ENCODE measurements at regions of chr9 and their contacts with region 1.

Region 1: DNA sequence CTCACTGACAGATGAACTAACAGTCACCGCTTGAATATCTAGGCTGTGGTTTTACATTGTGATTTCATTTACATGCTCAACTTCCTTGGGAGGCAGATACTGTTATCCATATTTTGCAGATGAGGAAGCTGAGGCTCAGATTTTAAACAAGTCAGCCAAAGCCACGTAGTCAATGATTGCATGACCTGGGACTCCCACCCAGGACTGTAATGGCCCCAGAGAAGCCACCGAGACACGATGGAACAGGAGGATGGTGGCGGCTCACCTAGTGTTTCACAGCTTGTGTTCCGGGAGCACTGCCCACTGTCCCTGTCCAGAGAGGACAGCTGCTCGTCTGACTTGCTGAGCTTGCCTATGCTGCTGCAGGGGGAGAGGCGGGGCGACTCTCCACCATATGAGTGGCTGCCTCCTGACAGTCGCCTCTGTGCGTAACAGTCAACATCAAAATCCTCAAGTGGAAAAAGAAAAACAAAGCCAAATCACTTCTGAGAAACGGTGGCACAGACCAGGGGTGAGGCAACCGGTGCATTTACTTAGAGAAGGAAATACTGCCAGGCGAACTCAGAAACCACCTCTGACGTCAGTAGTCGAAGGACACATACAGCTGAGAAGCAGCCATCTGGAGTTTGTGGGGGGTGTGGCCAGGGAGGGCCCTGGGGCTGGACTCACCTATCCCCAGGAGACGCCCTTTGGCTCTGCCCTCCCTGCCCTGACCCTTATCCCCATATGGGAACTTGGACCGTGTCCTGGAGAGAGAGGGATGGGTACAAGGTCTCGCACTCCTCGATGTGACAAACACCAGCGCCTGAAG is 82.5 kb downstream of the PRRT1B start:
- DNase-seq: no peak
- ATAC-seq: peak; percentile 48
- H3K4me3 ChIP-seq: no peak overlapping the region
- H3K27ac ChIP-seq: peak overlapping the region; percentile 88
- H3K4me1 ChIP-seq: peaks cover 44% of the 10 kb centered on the region
- H3K27me3 ChIP-seq: no peaks in the 10 kb centered on the region
- CTCF ChIP-seq: no peak
- EP300 ChIP-seq: no peak
- POLR2A ChIP-seq: 0 out of 2 replicates have a peak, but pooled peaks have one; percentile 22
- RAD21 ChIP-seq: no peak

Region 2: GRCh38 chr9:130884980-130885696 is 742.7 kb before region 1 on chr9:
- CTCF ChIA-PET with region 1: no interaction called
- POLR2A ChIA-PET with region 1: no interaction called
- RAD21 ChIA-PET with region 1: no interaction called
- SMC1A ChIA-PET with region 1: no interaction called
- in situ Hi-C with region 1: no loop called
- intact Hi-C with region 1: no loop called
- DNase-seq: no peak
- ATAC-seq: no peak
- H3K4me3 ChIP-seq: no peak overlapping the region
- H3K27ac ChIP-seq: no peak overlapping the region
- H3K4me1 ChIP-seq: no peaks in the 10 kb centered on the region
- H3K27me3 ChIP-seq: no peaks in the 10 kb centered on the region
- CTCF ChIP-seq: no peak
- EP300 ChIP-seq: no peak
- POLR2A ChIP-seq: no peak
- RAD21 ChIP-seq: no peak

Region 3: GRCh38 chr9:131181091-131181681 is 446.7 kb before region 1 on chr9:
- CTCF ChIA-PET with region 1: no interaction called
- POLR2A ChIA-PET with region 1: no interaction called
- RAD21 ChIA-PET with region 1: no interaction called
- SMC1A ChIA-PET with region 1: no interaction called
- in situ Hi-C with region 1: no loop called
- intact Hi-C with region 1: no loop called
- DNase-seq: no peak
- ATAC-seq: 0 out of 3 replicates have a peak, but pooled peaks have one; percentile 23
- H3K4me3 ChIP-seq: no peak overlapping the region
- H3K27ac ChIP-seq: no peak overlapping the region
- H3K4me1 ChIP-seq: peaks cover 13% of the 10 kb centered on the region
- H3K27me3 ChIP-seq: no peaks in the 10 kb centered on the region
- CTCF ChIP-seq: peak in 1 of 3 experiments; percentile 19; a peak in 1 of 6 replicates
- EP300 ChIP-seq: no peak
- POLR2A ChIP-seq: no peak
- RAD21 ChIP-seq: no peak

Region 4: DNA sequence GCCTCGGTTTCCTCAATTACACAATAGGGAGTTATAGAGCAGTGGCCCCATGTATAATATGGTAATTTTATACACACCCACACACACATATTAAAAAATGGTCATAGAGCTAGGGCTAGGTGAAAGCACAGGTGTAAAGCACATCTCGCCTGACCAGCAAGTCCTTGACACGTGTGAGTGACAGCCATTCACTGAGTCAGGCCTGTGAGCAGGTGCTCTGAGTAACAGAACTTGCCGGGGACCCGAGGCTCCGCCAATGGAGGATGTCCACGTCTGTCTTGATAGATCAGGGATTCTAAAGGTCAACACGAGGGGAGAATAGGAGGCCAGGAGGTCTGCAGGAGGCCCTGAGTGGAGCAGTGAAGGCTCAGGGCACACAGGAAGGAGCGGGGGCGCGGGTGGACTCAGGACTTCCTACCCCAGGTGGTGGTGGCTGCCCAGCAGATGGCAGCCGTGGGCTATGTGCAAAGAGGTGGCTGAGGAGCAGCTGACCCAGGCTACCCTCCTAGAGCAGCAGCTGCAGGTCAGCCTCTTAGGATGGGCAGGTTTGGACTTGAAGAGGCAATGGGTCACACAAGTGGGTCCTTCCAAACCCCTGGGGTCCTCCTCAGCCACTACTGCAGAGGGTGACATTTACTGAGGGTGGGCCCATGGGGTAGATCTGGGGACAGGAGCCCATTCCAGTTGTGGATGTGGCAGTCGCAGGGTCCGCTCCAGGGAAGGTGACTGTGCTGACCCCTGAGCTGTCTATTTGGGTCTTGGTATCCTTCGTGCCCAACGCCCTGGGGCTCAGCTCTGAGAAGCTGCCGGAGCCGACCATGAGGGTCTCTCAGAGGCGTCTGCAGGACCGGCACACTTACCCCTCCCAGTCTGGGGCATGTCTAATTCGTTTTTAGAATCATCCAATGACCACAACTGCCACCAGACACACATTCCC is 36.7 kb before region 1 on chr9:
- CTCF ChIA-PET with region 1: interaction called, 15 read pairs
- POLR2A ChIA-PET with region 1: no interaction called
- RAD21 ChIA-PET with region 1: interaction called, 8 read pairs
- SMC1A ChIA-PET with region 1: interaction called, 5 read pairs
- in situ Hi-C with region 1: no loop called
- intact Hi-C with region 1: loop called (anchors 5 kb)
- DNase-seq: peak; percentile 21
- ATAC-seq: peak; percentile 98
- H3K4me3 ChIP-seq: no peak overlapping the region
- H3K27ac ChIP-seq: no peak overlapping the region
- H3K4me1 ChIP-seq: no peaks in the 10 kb centered on the region
- H3K27me3 ChIP-seq: no peaks in the 10 kb centered on the region
- CTCF ChIP-seq: peak; percentile 73 to 97 (median 86)
- EP300 ChIP-seq: no peak
- POLR2A ChIP-seq: 0 out of 2 replicates have a peak, but pooled peaks have one; percentile 53
- RAD21 ChIP-seq: peak; percentile 78

Region 5: GRCh38 chr9:131668439-131669268 is 40.8 kb after region 1 on chr9:
- CTCF ChIA-PET with region 1: interaction called, 11 read pairs
- POLR2A ChIA-PET with region 1: interaction called, 3 read pairs
- RAD21 ChIA-PET with region 1: interaction called, 32 read pairs
- SMC1A ChIA-PET with region 1: interaction called, 12 read pairs
- in situ Hi-C with region 1: no loop called
- intact Hi-C with region 1: loop called (anchors 5 kb)
- DNase-seq: peak; percentile 62
- ATAC-seq: peak; percentile 74
- H3K4me3 ChIP-seq: peak overlapping the region; percentile 54
- H3K27ac ChIP-seq: peak overlapping the region; percentile 88
- H3K4me1 ChIP-seq: peaks cover 72% of the 10 kb centered on the region
- H3K27me3 ChIP-seq: no peaks in the 10 kb centered on the region
- CTCF ChIP-seq: peak; percentile 3 to 5 (median 4); a peak in 1 of 6 replicates
- EP300 ChIP-seq: peak; percentile 25 to 47; a peak in 2 of 4 replicates
- POLR2A ChIP-seq: peak; percentile 11; the same call in 1 of the 2 replicates
- RAD21 ChIP-seq: no peak; the same call in 1 of the 2 replicates

Region 6: DNA sequence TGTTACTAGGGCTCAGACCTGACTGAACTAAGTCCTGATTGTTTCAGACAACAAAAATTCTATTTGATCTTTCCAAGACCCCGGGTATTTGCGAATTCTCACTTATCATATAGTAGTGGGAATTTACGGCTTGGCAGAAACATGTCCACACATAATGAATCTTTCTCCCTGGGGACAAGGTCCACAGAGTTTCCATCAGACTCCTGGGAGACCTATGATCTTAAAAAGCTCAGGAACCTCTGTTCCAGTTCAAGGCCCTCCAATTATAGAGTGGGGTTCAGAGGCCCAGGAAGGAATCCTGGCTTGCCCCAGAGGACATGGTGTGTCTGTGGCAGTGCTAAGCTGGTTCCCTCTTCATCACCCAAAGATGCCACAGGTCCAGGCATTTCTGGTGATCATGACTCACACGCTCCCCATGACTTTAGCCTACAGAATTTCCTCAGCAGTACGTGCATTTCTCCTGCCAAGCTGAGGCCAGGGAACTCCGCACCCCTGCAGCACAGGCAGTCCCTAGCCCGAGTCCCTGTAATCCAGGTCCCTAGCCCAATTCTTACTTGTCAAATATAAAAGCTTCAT is 99.4 kb after region 1 on chr9:
- CTCF ChIA-PET with region 1: interaction called, 19 read pairs
- POLR2A ChIA-PET with region 1: interaction called, 30 read pairs
- RAD21 ChIA-PET with region 1: interaction called, 52 read pairs
- SMC1A ChIA-PET with region 1: interaction called, 58 read pairs
- in situ Hi-C with region 1: no loop called
- intact Hi-C with region 1: no loop called
- DNase-seq: no peak
- ATAC-seq: no peak
- H3K4me3 ChIP-seq: peak overlapping the region; percentile 63
- H3K27ac ChIP-seq: peak overlapping the region; percentile 99
- H3K4me1 ChIP-seq: peaks cover 69% of the 10 kb centered on the region
- H3K27me3 ChIP-seq: no peaks in the 10 kb centered on the region
- CTCF ChIP-seq: no peak
- EP300 ChIP-seq: no peak
- POLR2A ChIP-seq: 0 out of 2 replicates have a peak, but pooled peaks have one; percentile 20
- RAD21 ChIP-seq: no peak

Region 7: DNA sequence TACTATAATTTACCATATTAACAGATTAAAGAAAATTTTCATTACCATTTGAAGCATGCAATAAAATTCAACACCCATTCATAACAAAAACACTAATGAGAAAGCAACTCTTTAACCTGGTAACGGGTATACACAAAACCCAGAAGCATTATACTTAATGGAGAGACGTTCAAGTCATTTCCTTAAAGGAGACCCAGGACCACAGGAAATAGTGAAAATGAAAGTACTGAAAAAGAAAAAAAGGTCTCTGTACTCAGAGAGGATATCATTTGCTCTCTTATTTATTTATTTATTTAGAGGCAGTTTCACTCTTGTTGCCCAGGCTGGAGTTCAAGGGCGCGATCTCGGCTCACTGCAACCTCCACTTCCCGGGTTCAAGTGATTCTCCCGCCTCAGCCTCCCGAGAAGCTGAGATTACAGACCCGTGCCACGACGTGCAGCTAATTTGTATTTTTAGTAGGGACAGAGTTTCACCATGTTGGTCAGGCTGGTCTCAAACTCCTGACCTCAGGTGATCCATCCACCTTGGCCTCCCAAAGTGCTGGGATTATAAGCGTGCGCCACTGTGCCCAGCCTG is 665.4 kb after region 1 on chr9:
- CTCF ChIA-PET with region 1: no interaction called
- POLR2A ChIA-PET with region 1: no interaction called
- RAD21 ChIA-PET with region 1: no interaction called
- SMC1A ChIA-PET with region 1: no interaction called
- in situ Hi-C with region 1: no loop called
- intact Hi-C with region 1: no loop called
- DNase-seq: no peak
- ATAC-seq: 0 out of 3 replicates have a peak, but pooled peaks have one; percentile 20
- H3K4me3 ChIP-seq: no peak overlapping the region
- H3K27ac ChIP-seq: no peak overlapping the region
- H3K4me1 ChIP-seq: no peaks in the 10 kb centered on the region
- H3K27me3 ChIP-seq: no peaks in the 10 kb centered on the region
- CTCF ChIP-seq: no peak
- EP300 ChIP-seq: no peak
- POLR2A ChIP-seq: no peak
- RAD21 ChIP-seq: no peak

Measured in GM12878 (cell line).